ENCODE measurements at regions of chr12 and their contacts with region 1.

Region 1: GRCh38 chr12:7142056-7142644 is 12.0 kb downstream of the CLSTN3 start:
- DNase-seq: peak; percentile 70
- H3K4me3 Mint-ChIP-seq: no peak overlapping the region
- H3K27ac Mint-ChIP-seq: no peak overlapping the region
- H3K4me1 Mint-ChIP-seq: no peaks in the 10 kb centered on the region
- H3K27me3 Mint-ChIP-seq: no peaks in the 10 kb centered on the region
- CTCF ChIP-seq: peak; percentile 45

Region 2: DNA sequence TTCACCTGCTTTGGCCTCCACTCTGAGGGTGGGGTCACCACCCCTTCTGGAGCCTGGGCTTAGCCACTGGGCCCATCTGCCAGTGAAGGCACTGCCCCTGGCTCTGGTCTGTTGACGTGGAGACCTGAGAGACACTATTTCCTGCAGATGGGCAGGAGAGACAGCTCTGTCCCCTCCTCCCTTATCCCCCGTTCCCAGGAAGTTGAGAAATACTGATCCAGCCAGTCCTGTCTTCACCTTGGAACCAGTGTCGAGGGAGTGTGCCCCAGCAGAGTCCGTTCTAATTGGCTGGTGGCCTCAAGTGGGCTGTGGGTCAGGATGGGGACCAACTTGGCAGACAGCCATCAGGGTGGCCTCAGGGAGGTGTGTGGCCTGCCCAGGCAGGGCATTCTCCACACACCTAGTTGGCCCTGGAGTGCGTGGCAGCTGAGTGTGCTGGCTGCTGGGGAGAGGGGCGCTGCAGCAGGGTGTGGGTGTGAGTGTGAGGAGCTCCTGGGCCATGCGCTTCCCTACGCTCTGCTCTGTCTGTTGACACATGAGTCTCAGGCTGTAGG is 13.4 kb after region 1 on chr12:
- CTCF ChIA-PET with region 1: interaction called, 106 read pairs
- POLR2A ChIA-PET with region 1: interaction called, 4 read pairs
- intact Hi-C with region 1: no loop called
- DNase-seq: peak; percentile 83
- H3K4me3 Mint-ChIP-seq: no peak overlapping the region
- H3K27ac Mint-ChIP-seq: no peak overlapping the region
- H3K4me1 Mint-ChIP-seq: peaks cover 11% of the 10 kb centered on the region
- H3K27me3 Mint-ChIP-seq: no peaks in the 10 kb centered on the region
- CTCF ChIP-seq: no peak